B cell (primary cell): ENCODE measurements at regions of chr1 and their contacts with region 1.

Region 1: GRCh38 chr1:21255278-21255942 is 34.9 kb downstream of the ECE1 start:
- DNase-seq: peak; percentile 85
- ATAC-seq: peak; percentile 77
- H3K4me3 ChIP-seq: no peak overlapping the region
- H3K4me3 Mint-ChIP-seq: no peak overlapping the region
- H3K27ac ChIP-seq: no peak overlapping the region
- H3K27ac Mint-ChIP-seq: peak overlapping the region; percentile 79
- H3K4me1 ChIP-seq: peaks cover 9 to 19% of the 10 kb centered on the region in 2 donors
- H3K4me1 Mint-ChIP-seq: peaks cover 20% of the 10 kb centered on the region
- H3K27me3 ChIP-seq: no peaks in the 10 kb centered on the region
- H3K27me3 Mint-ChIP-seq: no peaks in the 10 kb centered on the region
- CTCF ChIP-seq: peak; percentile 82

Region 2: DNA sequence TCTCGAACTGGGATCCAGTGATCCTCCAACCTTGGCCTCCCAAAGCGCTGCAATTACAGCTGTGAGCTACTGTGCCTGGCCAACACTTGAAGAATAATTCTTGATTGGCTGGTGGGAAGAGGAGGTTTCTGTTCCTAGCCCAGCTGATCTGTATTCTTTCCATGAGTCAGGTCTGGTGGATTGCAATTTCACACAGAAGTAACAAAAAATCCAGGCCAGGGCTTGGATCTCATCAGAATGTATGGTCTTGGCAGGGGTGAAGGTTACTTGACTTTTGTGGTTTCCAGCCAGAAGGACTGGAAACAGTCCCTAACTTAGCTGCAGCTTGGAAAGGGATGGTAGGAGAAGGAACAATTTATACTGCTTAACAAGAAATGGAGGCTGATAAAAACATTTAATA is 463.2 kb before region 1 on chr1:
- CTCF ChIA-PET with region 1: no interaction called
- POLR2A ChIA-PET with region 1: no interaction called
- intact Hi-C with region 1: no loop called
- DNase-seq: no peak
- ATAC-seq: no peak
- H3K4me3 ChIP-seq: no peak overlapping the region
- H3K4me3 Mint-ChIP-seq: no peak overlapping the region
- H3K27ac ChIP-seq: no peak overlapping the region
- H3K27ac Mint-ChIP-seq: no peak overlapping the region
- H3K4me1 ChIP-seq: peaks cover 7 to 8% of the 10 kb centered on the region in 2 donors
- H3K4me1 Mint-ChIP-seq: peaks cover 10% of the 10 kb centered on the region
- H3K27me3 ChIP-seq: no peaks in the 10 kb centered on the region
- H3K27me3 Mint-ChIP-seq: no peaks in the 10 kb centered on the region
- CTCF ChIP-seq: no peak

Region 3: DNA sequence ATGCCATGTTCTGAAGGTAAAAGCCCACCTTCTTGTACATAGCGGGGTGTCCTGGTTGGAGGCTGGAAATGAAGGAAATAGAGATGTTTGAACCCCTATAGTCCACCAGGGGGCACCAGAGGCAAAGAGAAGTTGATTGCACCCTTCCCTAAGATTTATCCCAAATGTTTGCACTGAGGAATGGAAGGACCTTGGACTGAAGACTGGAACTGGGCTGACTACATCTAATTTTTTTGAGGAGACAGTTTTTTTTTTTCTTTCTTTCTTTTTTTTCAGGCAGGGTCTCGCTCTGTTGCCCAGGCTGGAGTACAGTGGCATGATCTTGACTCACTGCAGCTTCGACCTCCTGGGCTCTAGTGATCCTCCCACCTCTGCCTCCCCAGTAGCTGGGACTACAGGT is 23.4 kb before region 1 on chr1:
- CTCF ChIA-PET with region 1: interaction called, 62 read pairs
- POLR2A ChIA-PET with region 1: no interaction called
- intact Hi-C with region 1: loop called (anchors 1 kb)
- DNase-seq: peak; percentile 66
- ATAC-seq: peak; percentile 66
- H3K4me3 ChIP-seq: no peak overlapping the region
- H3K4me3 Mint-ChIP-seq: no peak overlapping the region
- H3K27ac ChIP-seq: no peak overlapping the region
- H3K27ac Mint-ChIP-seq: no peak overlapping the region
- H3K4me1 ChIP-seq: no peaks in the 10 kb centered on the region
- H3K4me1 Mint-ChIP-seq: no peaks in the 10 kb centered on the region
- H3K27me3 ChIP-seq: no peaks in the 10 kb centered on the region
- H3K27me3 Mint-ChIP-seq: no peaks in the 10 kb centered on the region
- CTCF ChIP-seq: peak; percentile 97

Region 4: GRCh38 chr1:21270086-21270689 is 14.8 kb after region 1 on chr1:
- CTCF ChIA-PET with region 1: interaction called, 88 read pairs
- POLR2A ChIA-PET with region 1: no interaction called
- intact Hi-C with region 1: loop called (anchors 1 kb)
- DNase-seq: peak; percentile 85
- ATAC-seq: peak; percentile 92
- H3K4me3 ChIP-seq: no peak overlapping the region
- H3K4me3 Mint-ChIP-seq: no peak overlapping the region
- H3K27ac ChIP-seq: no peak overlapping the region
- H3K27ac Mint-ChIP-seq: peak overlapping the region; percentile 51
- H3K4me1 ChIP-seq: peaks cover 0 to 7% of the 10 kb centered on the region in 2 donors
- H3K4me1 Mint-ChIP-seq: peaks cover 10% of the 10 kb centered on the region
- H3K27me3 ChIP-seq: no peaks in the 10 kb centered on the region
- H3K27me3 Mint-ChIP-seq: no peaks in the 10 kb centered on the region
- CTCF ChIP-seq: peak; percentile 97

Region 5: DNA sequence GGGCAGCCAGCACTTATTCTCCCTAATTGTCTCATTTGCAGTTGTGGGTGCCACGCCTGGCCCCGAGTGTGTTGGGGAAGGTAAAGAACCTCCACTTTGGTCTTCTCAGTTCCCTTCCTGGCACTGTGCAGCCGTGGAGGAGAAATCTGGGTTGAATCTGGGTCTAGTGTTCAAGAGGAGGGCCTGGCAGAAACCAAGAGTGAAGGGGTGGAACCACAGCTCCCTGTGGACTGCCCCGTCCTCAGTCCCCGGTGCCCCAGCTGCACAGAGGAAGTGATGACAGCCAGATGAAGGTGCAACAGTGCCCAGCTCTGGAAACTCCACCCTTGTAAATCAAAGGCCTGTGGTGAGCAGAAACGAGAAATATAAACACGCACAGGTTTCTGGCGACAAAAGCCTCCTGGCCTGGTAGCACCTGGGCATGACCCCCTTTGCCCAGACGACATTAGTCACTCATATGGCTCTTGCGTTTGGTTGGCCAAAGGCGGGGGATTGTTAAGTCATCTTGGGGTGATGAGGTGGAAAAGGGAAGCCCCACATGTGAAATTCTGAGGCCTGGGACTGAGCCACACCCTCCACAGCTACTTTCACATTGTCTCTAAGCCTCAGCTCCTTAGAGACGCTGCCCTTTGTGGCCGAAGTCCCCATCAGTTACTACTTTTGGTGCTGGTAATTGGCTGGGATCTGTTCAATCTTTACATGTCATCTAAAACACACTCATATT is 39.0 kb after region 1 on chr1:
- CTCF ChIA-PET with region 1: interaction called, 92 read pairs
- POLR2A ChIA-PET with region 1: no interaction called
- intact Hi-C with region 1: loop called (anchors 2 kb)
- DNase-seq: peak; percentile 97
- ATAC-seq: peak; percentile 71
- H3K4me3 ChIP-seq: peak overlapping the region; percentile 48 to 75 (median 61)
- H3K4me3 Mint-ChIP-seq: peak overlapping the region; percentile 87
- H3K27ac ChIP-seq: peak overlapping the region; percentile 96 to 99
- H3K27ac Mint-ChIP-seq: peak overlapping the region; percentile 95
- H3K4me1 ChIP-seq: peaks cover 77 to 90% of the 10 kb centered on the region in 2 donors
- H3K4me1 Mint-ChIP-seq: peaks cover 85% of the 10 kb centered on the region
- H3K27me3 ChIP-seq: no peaks in the 10 kb centered on the region
- H3K27me3 Mint-ChIP-seq: no peaks in the 10 kb centered on the region
- CTCF ChIP-seq: no peak

Region 6: DNA sequence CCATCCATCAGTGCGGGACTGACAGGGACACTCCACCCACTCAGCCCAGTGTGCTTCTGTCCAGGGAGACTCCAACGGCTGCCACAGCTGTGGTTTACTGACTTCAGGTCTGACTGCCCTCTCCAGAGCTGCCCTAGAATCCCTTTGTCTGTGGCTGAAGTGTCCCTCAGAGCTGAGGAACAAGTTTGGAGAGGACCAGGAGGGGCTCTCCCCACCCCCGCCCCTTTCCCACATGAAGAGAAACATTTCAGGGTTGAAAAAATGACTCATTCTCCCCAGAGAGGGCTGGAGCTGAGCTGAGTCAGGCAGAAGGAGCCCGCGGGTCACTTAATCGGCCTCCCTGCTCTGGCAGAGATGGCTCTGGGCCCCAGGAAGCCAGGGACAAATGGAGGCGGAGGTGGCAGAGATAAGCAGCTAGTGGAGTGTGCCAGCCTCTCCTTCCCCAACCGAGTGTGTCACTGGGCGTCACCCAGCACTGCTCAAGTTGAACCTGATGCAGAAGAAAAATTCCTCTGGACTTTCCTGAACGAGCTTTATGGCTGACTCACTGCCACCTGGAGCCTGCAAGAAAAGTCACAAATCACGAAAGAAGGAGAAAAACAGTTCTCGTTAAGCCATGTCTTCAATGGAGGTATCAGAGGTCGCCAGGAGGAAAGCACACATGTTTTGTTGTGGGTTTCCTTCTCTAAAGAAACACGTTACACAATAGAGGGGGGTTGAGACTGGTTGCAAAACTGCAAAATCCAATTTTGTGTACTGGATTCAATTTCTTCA is 69.1 kb after region 1 on chr1:
- CTCF ChIA-PET with region 1: interaction called, 29 read pairs
- POLR2A ChIA-PET with region 1: no interaction called
- intact Hi-C with region 1: no loop called
- DNase-seq: peak; percentile 65
- ATAC-seq: peak; percentile 67
- H3K4me3 ChIP-seq: peak overlapping the region in 4 of 5 experiments; percentile 4 to 16 (median 14)
- H3K4me3 Mint-ChIP-seq: peak overlapping the region; percentile 81
- H3K27ac ChIP-seq: peak overlapping the region; percentile 63 to 64
- H3K27ac Mint-ChIP-seq: peak overlapping the region; percentile 93
- H3K4me1 ChIP-seq: peaks cover 50 to 56% of the 10 kb centered on the region in 2 donors
- H3K4me1 Mint-ChIP-seq: peaks cover 71% of the 10 kb centered on the region
- H3K27me3 ChIP-seq: no peaks in the 10 kb centered on the region
- H3K27me3 Mint-ChIP-seq: no peaks in the 10 kb centered on the region
- CTCF ChIP-seq: no peak

Region 7: GRCh38 chr1:21344750-21345443 is 89.5 kb after region 1 on chr1:
- CTCF ChIA-PET with region 1: interaction called, 90 read pairs
- POLR2A ChIA-PET with region 1: interaction called, 5 read pairs
- intact Hi-C with region 1: no loop called
- DNase-seq: no peak
- ATAC-seq: peak; percentile 39
- H3K4me3 ChIP-seq: peak overlapping the region; percentile 60 to 84 (median 69)
- H3K4me3 Mint-ChIP-seq: peak overlapping the region; percentile 91
- H3K27ac ChIP-seq: peak overlapping the region; percentile 35 to 43
- H3K27ac Mint-ChIP-seq: peak overlapping the region; percentile 85
- H3K4me1 ChIP-seq: peaks cover 38 to 45% of the 10 kb centered on the region in 2 donors
- H3K4me1 Mint-ChIP-seq: peaks cover 39% of the 10 kb centered on the region
- H3K27me3 ChIP-seq: peaks cover 0 to 4% (median 0%) of the 10 kb centered on the region in 4 experiments
- H3K27me3 Mint-ChIP-seq: no peaks in the 10 kb centered on the region
- CTCF ChIP-seq: no peak

Region 8: GRCh38 chr1:21963477-21964217 is 708.2 kb after region 1 on chr1:
- CTCF ChIA-PET with region 1: no interaction called
- POLR2A ChIA-PET with region 1: no interaction called
- intact Hi-C with region 1: loop called (anchors 10 kb)
- DNase-seq: peak; percentile 83
- ATAC-seq: peak; percentile 96
- H3K4me3 ChIP-seq: no peak overlapping the region
- H3K4me3 Mint-ChIP-seq: no peak overlapping the region
- H3K27ac ChIP-seq: no peak overlapping the region
- H3K27ac Mint-ChIP-seq: no peak overlapping the region
- H3K4me1 ChIP-seq: peaks cover 0 to 4% of the 10 kb centered on the region in 2 donors
- H3K4me1 Mint-ChIP-seq: no peaks in the 10 kb centered on the region
- H3K27me3 ChIP-seq: no peaks in the 10 kb centered on the region
- H3K27me3 Mint-ChIP-seq: peaks cover 14% of the 10 kb centered on the region
- CTCF ChIP-seq: peak; percentile 94

Region 9: GRCh38 chr1:22039594-22040285 is 784.3 kb after region 1 on chr1:
- CTCF ChIA-PET with region 1: no interaction called
- POLR2A ChIA-PET with region 1: no interaction called
- intact Hi-C with region 1: no loop called
- DNase-seq: peak; percentile 96
- ATAC-seq: peak; percentile 99
- H3K4me3 ChIP-seq: peak overlapping the region; percentile 30 to 71 (median 52)
- H3K4me3 Mint-ChIP-seq: peak overlapping the region; percentile 87
- H3K27ac ChIP-seq: peak overlapping the region; percentile 98
- H3K27ac Mint-ChIP-seq: peak overlapping the region; percentile 98
- H3K4me1 ChIP-seq: peaks cover 42 to 60% of the 10 kb centered on the region in 2 donors
- H3K4me1 Mint-ChIP-seq: peaks cover 41% of the 10 kb centered on the region
- H3K27me3 ChIP-seq: no peaks in the 10 kb centered on the region
- H3K27me3 Mint-ChIP-seq: no peaks in the 10 kb centered on the region
- CTCF ChIP-seq: peak; percentile 8